Activated naive CD4-positive, alpha-beta T cell treated with anti-CD3 and anti-CD28 coated beads for 36 hours (primary cell): ENCODE measurements at regions of chr2 and their contacts with region 1.

Region 1: DNA sequence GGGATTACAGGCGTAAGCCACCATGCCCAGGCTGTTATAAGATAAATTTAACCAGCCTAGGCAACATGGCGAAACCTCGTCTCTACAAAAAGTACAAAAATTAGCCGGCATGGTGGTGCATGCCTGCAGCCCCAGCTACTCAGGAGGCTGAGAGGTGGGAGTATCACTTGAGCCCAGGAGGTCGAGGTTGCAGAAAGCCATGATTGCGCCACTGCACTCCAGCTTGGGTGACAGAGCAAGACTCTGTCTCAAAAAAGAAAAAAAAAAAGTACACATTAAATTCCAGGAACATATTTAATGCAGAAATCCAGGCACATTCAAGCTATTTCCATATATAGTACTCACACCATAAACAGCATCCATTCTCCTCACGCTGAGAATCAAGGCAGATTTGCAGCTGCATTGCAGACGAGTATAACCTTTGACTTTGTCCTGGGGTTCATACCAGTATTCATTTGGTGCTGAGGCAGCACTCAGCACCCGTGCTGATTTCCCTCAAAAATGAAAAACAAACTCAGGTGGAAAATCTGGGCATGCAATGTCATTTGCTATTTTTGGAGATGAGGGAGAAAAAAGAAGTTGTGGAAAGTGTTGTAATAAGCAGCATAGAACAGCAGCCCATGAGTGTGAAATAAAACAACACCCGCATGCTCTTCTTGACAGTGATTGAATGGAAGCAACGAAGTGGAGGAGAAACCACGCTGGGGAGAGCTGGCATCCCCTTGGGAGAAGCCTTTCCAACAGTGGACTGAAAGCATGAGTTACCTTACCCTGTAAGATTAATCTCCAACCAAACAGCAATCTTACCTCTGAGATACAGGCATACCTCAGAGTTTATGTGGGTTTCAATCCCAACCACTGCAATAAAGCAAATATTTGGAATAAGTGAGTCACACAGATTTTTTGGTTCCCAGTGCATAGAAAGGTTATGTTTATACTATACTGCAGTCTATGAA is 46.8 kb upstream of the ANXA4 start:
- DNase-seq: no peak
- H3K4me3 Mint-ChIP-seq: peak overlapping the region; percentile 22
- H3K27ac Mint-ChIP-seq: peak overlapping the region; percentile 18
- H3K4me1 Mint-ChIP-seq: peaks cover 83% of the 10 kb centered on the region
- H3K27me3 Mint-ChIP-seq: no peaks in the 10 kb centered on the region

Region 2: DNA sequence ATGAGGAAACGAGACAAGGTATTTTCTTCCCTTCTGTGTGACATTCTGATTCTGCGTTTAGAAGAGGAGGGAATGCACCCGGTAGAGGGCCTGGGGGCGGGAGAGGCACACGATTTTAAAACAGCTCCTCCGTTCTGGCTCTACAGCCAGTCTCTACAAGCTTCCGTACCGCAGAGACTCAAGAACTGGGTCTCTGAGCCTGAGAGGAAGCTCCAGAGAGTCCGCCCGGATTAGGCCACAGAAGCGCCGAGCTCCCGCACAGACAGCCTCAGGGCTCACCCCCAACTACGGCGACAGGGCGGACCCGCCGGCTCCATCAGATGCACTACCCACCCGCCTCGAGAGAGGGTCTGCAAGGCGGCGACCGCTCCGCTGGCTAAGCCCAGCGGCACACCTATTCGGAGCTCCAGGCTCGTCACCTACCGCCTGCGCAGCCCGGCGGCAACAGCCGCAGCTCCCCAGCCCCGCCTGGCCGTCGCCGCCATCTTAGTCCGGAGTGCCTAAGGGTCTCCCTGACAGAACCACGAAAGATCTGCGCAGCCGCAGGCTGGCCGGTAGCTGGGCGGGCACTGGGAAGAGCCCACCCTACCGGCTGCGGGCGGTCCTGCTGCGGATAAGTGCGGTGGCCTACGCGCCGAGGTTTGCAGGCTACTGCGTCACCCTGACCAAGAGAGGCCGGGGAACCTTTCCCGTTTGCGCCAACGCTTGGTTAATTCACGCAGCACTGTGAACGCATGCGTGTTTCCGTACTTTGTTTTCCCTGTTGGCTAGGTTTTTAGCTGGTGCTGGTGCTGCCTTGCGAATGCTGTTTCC is 258.0 kb before region 1 on chr2 and contains the start of gene NFU1:
- CTCF ChIA-PET with region 1: no interaction called
- intact Hi-C with region 1: loop called (anchors 5 kb)
- DNase-seq: peak; percentile 90
- H3K4me3 Mint-ChIP-seq: peak within 1 kb of the TSS; percentile 95
- H3K27ac Mint-ChIP-seq: peak within 1 kb of the TSS; percentile 94
- H3K4me1 Mint-ChIP-seq: peaks cover 29% of the 10 kb centered on the region
- H3K27me3 Mint-ChIP-seq: no peaks in the 10 kb centered on the region
- total RNA-seq, gene NFU1: 35.7 to 39.3 TPM

Region 3: GRCh38 chr2:69616756-69617155 is 78.4 kb before region 1 on chr2:
- CTCF ChIA-PET with region 1: no interaction called
- intact Hi-C with region 1: loop called (anchors 2 kb)
- DNase-seq: peak; percentile 73
- H3K4me3 Mint-ChIP-seq: peak overlapping the region; percentile 11
- H3K27ac Mint-ChIP-seq: peak overlapping the region; percentile 57
- H3K4me1 Mint-ChIP-seq: peaks cover 37% of the 10 kb centered on the region
- H3K27me3 Mint-ChIP-seq: no peaks in the 10 kb centered on the region

Region 4: DNA sequence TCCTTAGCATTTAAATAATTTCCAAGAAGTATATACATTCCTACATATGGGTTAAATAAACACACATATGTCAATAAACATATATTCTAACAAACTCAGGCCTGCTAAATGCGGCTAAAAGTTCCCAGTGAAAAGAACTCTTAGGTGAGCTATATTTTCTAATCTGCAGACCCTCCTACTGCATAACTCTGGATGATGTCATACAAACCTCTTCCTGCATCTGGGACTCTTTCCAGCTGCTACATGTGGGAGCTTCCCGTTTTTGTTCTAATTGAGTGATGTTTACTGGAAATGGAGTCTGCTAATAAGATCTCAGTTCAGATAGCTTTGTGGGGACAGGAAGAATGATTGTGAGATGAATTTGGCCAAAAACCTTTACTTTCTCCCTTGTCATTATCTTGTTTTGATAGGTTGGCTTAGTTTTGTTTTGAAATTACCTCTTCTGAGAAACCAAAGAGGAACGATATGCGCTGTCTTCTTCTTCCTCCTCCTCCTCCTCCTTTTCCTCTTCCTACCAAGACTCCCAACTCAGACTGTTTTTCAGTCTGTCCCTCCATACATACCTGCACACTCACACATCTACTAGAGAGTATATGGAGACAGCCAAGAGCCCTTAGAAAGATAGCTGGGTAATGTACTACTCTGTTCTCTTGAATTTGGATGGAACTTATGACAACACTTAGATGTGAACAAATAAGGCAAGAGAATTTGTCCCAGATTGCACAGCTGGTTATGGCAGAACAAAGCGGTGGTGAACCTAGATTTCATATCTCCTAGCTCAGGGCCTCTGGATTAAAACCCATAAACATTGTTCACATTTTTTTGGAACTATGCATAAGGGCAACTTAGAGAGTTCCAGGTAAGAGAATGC is 11.8 kb before region 1 on chr2:
- CTCF ChIA-PET with region 1: interaction called, 10 read pairs
- intact Hi-C with region 1: no loop called
- DNase-seq: no peak
- H3K4me3 Mint-ChIP-seq: peak overlapping the region; percentile 45
- H3K27ac Mint-ChIP-seq: peak overlapping the region; percentile 75
- H3K4me1 Mint-ChIP-seq: peaks cover 64% of the 10 kb centered on the region
- H3K27me3 Mint-ChIP-seq: no peaks in the 10 kb centered on the region

Region 5: GRCh38 chr2:69997015-69997830 is 302.1 kb after region 1 on chr2:
- CTCF ChIA-PET with region 1: no interaction called
- intact Hi-C with region 1: no loop called
- DNase-seq: peak; percentile 42
- H3K4me3 Mint-ChIP-seq: no peak overlapping the region
- H3K27ac Mint-ChIP-seq: no peak overlapping the region
- H3K4me1 Mint-ChIP-seq: peaks cover 9% of the 10 kb centered on the region
- H3K27me3 Mint-ChIP-seq: no peaks in the 10 kb centered on the region